Naive thymus-derived CD8-positive, alpha-beta T cell (primary cell): ENCODE measurements at regions of chr17 and their contacts with region 1.

Region 1: GRCh38 chr17:29148790-29149430 is 31.3 kb downstream of the MYO18A start:
- DNase-seq: peak; percentile 85 to 93 (median 90)
- ATAC-seq: peak; percentile 90 to 91
- H3K4me3 Mint-ChIP-seq: peak overlapping the region; percentile 70 to 90 (median 77)
- H3K27ac Mint-ChIP-seq: peak overlapping the region; percentile 43 to 92 (median 85)
- H3K4me1 Mint-ChIP-seq: peaks cover 28 to 57% (median 44%) of the 10 kb centered on the region in 4 donors
- H3K27me3 Mint-ChIP-seq: no peaks in the 10 kb centered on the region

Region 2: GRCh38 chr17:29124117-29124924 is 24.6 kb before region 1 on chr17:
- POLR2A ChIA-PET with region 1: interaction called, 13 read pairs
- DNase-seq: peak in 6 of 10 donors; percentile 27 to 59 (median 40)
- ATAC-seq: peak; percentile 94 to 96
- H3K4me3 Mint-ChIP-seq: no peak overlapping the region
- H3K27ac Mint-ChIP-seq: peak overlapping the region in 1 of 10 donors; percentile 11
- H3K4me1 Mint-ChIP-seq: peaks cover 6 to 12% (median 10%) of the 10 kb centered on the region in 4 donors
- H3K27me3 Mint-ChIP-seq: no peaks in the 10 kb centered on the region

Region 3: DNA sequence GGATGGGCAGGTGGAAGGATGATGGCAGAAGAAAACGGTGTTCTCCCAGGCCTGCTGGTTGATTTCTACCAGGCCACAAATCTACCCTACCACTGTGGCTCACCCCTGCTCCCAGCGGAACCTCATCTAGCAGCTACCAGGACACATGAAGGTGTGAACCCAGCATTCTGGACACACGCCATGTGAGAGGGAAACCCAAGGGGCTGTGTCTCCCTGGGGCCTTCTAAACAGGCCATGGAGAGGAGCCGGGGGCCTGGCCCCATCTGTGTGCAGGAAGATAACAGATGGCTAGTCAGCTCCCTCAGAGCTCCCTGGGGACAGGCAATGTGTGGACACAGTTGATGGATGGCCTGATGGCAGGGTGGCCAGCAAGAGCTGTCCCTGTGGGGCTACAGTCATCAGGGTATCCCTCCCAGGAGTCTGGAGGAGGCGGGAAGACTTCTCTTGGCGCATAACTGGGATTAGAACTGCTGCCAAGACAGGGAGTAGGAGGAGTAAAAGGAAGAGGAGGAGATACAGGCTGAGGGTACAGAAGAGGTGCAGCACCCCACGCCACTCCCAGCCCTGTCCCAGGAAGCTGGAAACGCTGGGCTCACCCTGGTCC is 13.9 kb after region 1 on chr17:
- POLR2A ChIA-PET with region 1: no interaction called
- DNase-seq: no peak
- ATAC-seq: no peak
- H3K4me3 Mint-ChIP-seq: no peak overlapping the region
- H3K27ac Mint-ChIP-seq: peak overlapping the region in 2 of 10 donors; percentile 14 to 38
- H3K4me1 Mint-ChIP-seq: peaks cover 11 to 19% (median 16%) of the 10 kb centered on the region in 4 donors
- H3K27me3 Mint-ChIP-seq: no peaks in the 10 kb centered on the region

Region 4: DNA sequence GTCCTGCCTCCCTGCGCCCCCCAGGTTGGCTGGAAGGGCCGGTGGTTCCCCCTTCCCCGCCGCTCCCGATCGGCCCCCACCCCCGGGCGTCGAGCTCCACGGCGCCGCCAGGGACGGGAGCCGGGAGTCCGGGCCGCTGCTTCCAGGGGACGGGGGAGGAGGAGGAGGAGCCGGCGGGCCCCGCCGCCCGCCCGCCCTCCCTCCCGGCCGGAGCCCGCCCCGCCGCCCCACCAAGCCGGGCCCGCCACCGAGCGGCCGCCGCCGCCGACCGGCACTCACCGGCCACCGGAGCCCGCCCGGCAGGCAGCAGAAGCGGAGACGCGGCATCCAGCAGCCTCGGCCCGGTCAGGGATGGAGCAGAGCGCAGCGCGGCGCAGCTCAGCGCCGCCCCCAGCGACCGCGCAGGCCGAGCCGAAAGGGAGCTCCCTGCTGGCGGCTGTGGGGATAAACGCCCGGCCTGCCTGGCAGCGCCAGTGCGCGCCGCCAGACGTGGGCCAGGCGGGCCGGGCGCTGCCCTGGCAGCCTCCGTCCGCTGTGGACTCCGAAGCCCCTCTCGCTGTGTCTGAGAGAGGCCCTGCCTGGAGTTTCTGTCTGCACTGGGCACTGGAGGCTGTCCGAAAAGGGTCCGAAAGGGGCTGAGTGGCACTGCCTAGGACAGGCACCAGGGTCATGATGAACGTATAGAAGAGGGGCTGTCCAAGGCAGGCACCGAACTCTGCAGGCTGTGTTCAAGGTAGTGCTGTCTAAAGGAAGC is 31.3 kb after region 1 on chr17 and contains the start of gene MYO18A:
- POLR2A ChIA-PET with region 1: interaction called, 64 read pairs
- DNase-seq: peak; percentile 56 to 81 (median 75)
- ATAC-seq: peak; percentile 87 to 88
- H3K4me3 Mint-ChIP-seq: peak within 1 kb of the TSS; percentile 38 to 80 (median 60)
- H3K27ac Mint-ChIP-seq: peak within 1 kb of the TSS in 8 of 10 donors; percentile 29 to 81 (median 42)
- H3K4me1 Mint-ChIP-seq: peaks cover 9 to 29% (median 27%) of the 10 kb centered on the region in 4 donors
- H3K27me3 Mint-ChIP-seq: no peaks in the 10 kb centered on the region
- polyA plus RNA-seq, gene MYO18A: 4.6 to 12.6 (median 5.9) TPM

Region 5: GRCh38 chr17:29219378-29220047 is 70.6 kb after region 1 on chr17:
- POLR2A ChIA-PET with region 1: interaction called, 15 read pairs
- DNase-seq: peak; percentile 44 to 85 (median 66)
- ATAC-seq: peak; percentile 99
- H3K4me3 Mint-ChIP-seq: peak overlapping the region in 1 of 10 donors; percentile 29
- H3K27ac Mint-ChIP-seq: no peak overlapping the region
- H3K4me1 Mint-ChIP-seq: peaks cover 6 to 8% (median 7%) of the 10 kb centered on the region in 4 donors
- H3K27me3 Mint-ChIP-seq: no peaks in the 10 kb centered on the region

Region 6: GRCh38 chr17:29293890-29294579 is 145.1 kb after region 1 on chr17 and contains the start of gene NUFIP2:
- POLR2A ChIA-PET with region 1: interaction called, 13 read pairs
- DNase-seq: peak; percentile 92 to 99 (median 98)
- ATAC-seq: peak; percentile 84 to 86
- H3K4me3 Mint-ChIP-seq: peak within 1 kb of the TSS; percentile 97 to 100 (median 99)
- H3K27ac Mint-ChIP-seq: peak within 1 kb of the TSS; percentile 97 to 99 (median 98)
- H3K4me1 Mint-ChIP-seq: peaks cover 15 to 50% (median 40%) of the 10 kb centered on the region in 4 donors
- H3K27me3 Mint-ChIP-seq: no peaks in the 10 kb centered on the region
- polyA plus RNA-seq, gene NUFIP2: 9.2 to 11.9 (median 11.5) TPM